CD8-positive, alpha-beta memory T cell (primary cell): ENCODE measurements at regions of chr5 and their contacts with region 1.

Region 1: DNA sequence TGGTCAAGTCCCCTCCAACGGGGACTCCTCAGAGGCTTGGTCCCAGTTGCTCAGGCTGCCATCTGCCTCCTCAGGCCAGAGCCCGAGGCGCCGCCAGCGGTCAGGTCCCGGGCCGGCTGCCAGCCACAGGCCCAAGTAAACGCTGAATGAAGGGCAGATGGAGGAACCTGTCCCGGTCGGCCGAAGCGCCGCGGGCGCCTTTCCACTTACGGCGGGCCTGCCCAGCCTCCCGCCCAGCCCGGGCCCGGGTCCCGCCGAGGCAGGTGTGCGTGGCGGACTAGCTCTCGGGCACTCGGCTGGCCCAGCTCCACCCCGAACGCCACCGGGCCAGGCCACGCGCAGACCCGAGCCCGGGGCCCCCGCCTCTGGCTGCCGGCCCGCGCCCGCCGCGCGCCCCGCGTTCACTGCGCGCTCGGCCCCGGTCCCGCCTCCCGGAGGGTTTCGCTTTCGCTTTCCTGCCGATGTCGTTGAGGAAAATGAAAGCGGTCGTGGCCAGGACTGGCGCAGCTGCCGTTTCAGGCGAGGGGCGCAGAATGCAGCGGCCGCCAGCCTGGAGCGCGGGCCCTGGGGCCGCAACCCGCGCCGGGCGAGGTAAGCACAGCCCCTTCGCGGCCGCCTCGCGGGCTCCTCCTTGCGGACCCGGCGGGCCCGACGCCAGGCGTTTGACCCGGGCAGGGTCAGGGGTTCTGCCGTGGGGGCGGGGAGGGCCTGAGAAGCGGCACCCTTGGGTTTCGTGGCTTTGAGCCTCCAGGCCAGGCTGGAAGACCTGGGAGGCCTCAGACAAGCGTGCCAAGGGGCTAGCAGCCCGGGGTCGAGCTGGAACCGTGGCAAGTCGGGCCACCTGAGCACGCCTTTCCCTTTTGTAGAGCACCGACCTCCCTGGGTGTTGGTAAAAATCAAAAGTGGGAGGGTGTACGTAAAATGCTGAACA is 41.2 kb downstream of the SLC22A5 start:
- DNase-seq: peak; percentile 78 to 91 (median 85)
- H3K4me3 ChIP-seq: peak overlapping the region; percentile 84
- H3K4me3 Mint-ChIP-seq: peak overlapping the region; percentile 91 to 99 (median 96)
- H3K27ac ChIP-seq: peak overlapping the region; percentile 93
- H3K27ac Mint-ChIP-seq: peak overlapping the region; percentile 96 to 99 (median 98)
- H3K4me1 ChIP-seq: peaks cover 74% of the 10 kb centered on the region
- H3K4me1 Mint-ChIP-seq: peaks cover 70 to 91% (median 75%) of the 10 kb centered on the region in 3 donors
- H3K27me3 ChIP-seq: no peaks in the 10 kb centered on the region
- H3K27me3 Mint-ChIP-seq: no peaks in the 10 kb centered on the region

Region 2: GRCh38 chr5:132369474-132370180 is 41.1 kb before region 1 on chr5 and contains the start of gene SLC22A5:
- CTCF ChIA-PET with region 1: interaction called, 3 read pairs
- POLR2A ChIA-PET with region 1: interaction called, 10 read pairs
- DNase-seq: peak; percentile 56 to 81 (median 70)
- H3K4me3 ChIP-seq: peak within 1 kb of the TSS; percentile 74
- H3K4me3 Mint-ChIP-seq: peak within 1 kb of the TSS; percentile 67 to 92 (median 83)
- H3K27ac ChIP-seq: peak within 1 kb of the TSS; percentile 69
- H3K27ac Mint-ChIP-seq: peak within 1 kb of the TSS in 7 of 8 donors; percentile 4 to 95 (median 70)
- H3K4me1 ChIP-seq: peaks cover 27% of the 10 kb centered on the region
- H3K4me1 Mint-ChIP-seq: peaks cover 17 to 30% (median 29%) of the 10 kb centered on the region in 3 donors
- H3K27me3 ChIP-seq: no peaks in the 10 kb centered on the region
- H3K27me3 Mint-ChIP-seq: no peaks in the 10 kb centered on the region
- total RNA-seq, gene SLC22A5: 5.2 to 5.9 TPM

Region 3: DNA sequence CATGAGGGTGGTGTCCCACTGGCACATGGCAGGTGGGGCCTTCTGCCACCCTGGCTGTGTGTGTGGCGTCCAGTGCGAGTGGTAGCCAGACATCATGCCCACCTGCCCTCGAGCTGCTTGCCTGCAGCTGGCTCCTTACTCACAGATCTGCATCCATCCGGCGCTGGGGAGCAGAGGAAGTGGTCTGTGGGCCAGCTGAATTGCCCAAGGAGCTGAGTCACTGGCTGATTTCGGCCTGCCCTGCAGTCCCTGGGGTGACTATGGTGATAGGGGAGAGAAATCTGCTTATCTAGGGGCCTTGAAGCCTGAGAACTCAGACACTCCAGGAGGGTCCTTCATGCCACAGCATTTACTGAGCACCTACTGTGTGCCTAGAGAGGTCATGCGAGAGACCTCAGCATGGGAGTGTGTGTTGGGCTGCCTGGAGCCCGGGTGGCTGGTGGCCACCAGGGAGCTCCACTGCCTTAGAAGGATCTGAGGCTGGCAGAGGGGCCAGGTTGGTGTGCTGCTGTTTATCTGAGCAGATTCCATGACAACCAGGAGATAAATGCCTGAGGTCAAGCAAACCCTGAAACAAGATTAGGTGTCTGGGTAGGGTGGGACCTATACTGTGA is 15.9 kb after region 1 on chr5:
- CTCF ChIA-PET with region 1: interaction called, 23 read pairs
- POLR2A ChIA-PET with region 1: interaction called, 14 read pairs
- DNase-seq: peak; percentile 37 to 83 (median 52)
- H3K4me3 ChIP-seq: peak overlapping the region; percentile 57
- H3K4me3 Mint-ChIP-seq: peak overlapping the region; percentile 61 to 89 (median 79)
- H3K27ac ChIP-seq: peak overlapping the region; percentile 84
- H3K27ac Mint-ChIP-seq: peak overlapping the region; percentile 95 to 99 (median 98)
- H3K4me1 ChIP-seq: peaks cover 100% of the 10 kb centered on the region
- H3K4me1 Mint-ChIP-seq: peaks cover 96 to 98% (median 97%) of the 10 kb centered on the region in 3 donors
- H3K27me3 ChIP-seq: no peaks in the 10 kb centered on the region
- H3K27me3 Mint-ChIP-seq: no peaks in the 10 kb centered on the region

Region 4: DNA sequence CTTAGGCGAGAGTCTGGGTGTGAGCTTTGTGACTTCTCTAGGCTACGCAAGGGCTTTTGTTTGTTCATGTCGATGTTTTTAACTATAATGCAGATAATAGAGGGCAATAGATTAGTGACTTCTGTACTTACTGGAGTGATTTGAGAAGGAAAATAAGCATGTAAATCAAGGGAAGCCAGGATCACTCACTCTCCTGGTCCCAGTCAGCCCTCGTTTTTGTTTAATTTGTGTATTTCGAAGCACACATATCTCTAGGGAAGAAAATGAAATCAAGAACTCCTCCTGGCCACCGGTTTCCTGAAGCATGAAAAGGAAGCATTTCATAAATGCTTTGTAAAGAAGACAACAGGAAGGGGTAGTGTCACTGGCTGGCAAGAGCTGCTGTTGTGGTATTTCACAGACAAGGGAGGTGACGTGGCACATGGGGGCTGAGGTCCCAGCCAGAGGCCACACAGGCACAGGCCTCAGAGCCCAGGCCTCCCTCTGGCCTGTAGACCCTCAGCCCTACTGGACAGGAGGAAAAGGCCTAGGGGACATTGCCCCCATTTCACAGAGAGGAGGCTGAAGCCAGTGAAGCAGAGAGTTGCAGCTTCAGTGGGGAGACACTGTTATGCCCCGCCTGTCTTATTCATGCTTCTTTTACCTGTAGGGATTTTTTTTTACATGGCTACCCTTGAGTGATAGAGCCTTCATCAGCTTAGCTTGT is 45.7 kb after region 1 on chr5:
- CTCF ChIA-PET with region 1: interaction called, 25 read pairs
- POLR2A ChIA-PET with region 1: interaction called, 43 read pairs
- DNase-seq: peak; percentile 55 to 85 (median 78)
- H3K4me3 ChIP-seq: peak overlapping the region; percentile 47
- H3K4me3 Mint-ChIP-seq: peak overlapping the region; percentile 37 to 86 (median 81)
- H3K27ac ChIP-seq: peak overlapping the region; percentile 93
- H3K27ac Mint-ChIP-seq: peak overlapping the region; percentile 98 to 100 (median 100)
- H3K4me1 ChIP-seq: peaks cover 94% of the 10 kb centered on the region
- H3K4me1 Mint-ChIP-seq: peaks cover 92 to 97% (median 95%) of the 10 kb centered on the region in 3 donors
- H3K27me3 ChIP-seq: no peaks in the 10 kb centered on the region
- H3K27me3 Mint-ChIP-seq: peaks cover 0 to 2% of the 10 kb centered on the region in 2 donors

Region 5: GRCh38 chr5:132473019-132473531 is 62.4 kb after region 1 on chr5:
- CTCF ChIA-PET with region 1: interaction called, 22 read pairs
- POLR2A ChIA-PET with region 1: interaction called, 36 read pairs
- DNase-seq: peak; percentile 81 to 96 (median 89)
- H3K4me3 ChIP-seq: no peak overlapping the region
- H3K4me3 Mint-ChIP-seq: peak overlapping the region; percentile 39 to 86 (median 64)
- H3K27ac ChIP-seq: peak overlapping the region; percentile 62
- H3K27ac Mint-ChIP-seq: peak overlapping the region; percentile 93 to 99 (median 96)
- H3K4me1 ChIP-seq: peaks cover 86% of the 10 kb centered on the region
- H3K4me1 Mint-ChIP-seq: peaks cover 87 to 99% (median 97%) of the 10 kb centered on the region in 3 donors
- H3K27me3 ChIP-seq: no peaks in the 10 kb centered on the region
- H3K27me3 Mint-ChIP-seq: peaks cover 0 to 9% of the 10 kb centered on the region in 2 donors

Region 6: DNA sequence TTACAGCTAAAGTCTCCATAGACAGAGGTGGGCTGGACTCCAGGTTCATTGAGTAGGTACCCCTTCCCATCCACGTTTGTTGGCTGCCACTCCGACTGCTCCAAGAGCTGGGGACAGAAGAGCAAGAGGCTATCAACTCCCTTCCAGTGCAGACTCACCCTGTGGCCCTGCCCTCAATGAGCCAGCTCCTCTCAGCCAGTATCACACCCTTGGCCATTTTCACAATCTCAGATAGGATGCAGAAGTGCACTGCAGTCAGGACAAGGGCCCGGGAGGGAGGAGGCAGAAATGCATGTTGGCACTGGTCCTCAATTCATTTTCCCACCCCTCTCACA is 73.6 kb after region 1 on chr5:
- CTCF ChIA-PET with region 1: interaction called, 78 read pairs
- POLR2A ChIA-PET with region 1: interaction called, 77 read pairs
- DNase-seq: no peak
- H3K4me3 ChIP-seq: no peak overlapping the region
- H3K4me3 Mint-ChIP-seq: peak overlapping the region in 6 of 7 donors; percentile 9 to 99 (median 68)
- H3K27ac ChIP-seq: no peak overlapping the region
- H3K27ac Mint-ChIP-seq: peak overlapping the region in 7 of 8 donors; percentile 73 to 100 (median 85)
- H3K4me1 ChIP-seq: peaks cover 78% of the 10 kb centered on the region
- H3K4me1 Mint-ChIP-seq: peaks cover 77 to 91% (median 78%) of the 10 kb centered on the region in 3 donors
- H3K27me3 ChIP-seq: no peaks in the 10 kb centered on the region
- H3K27me3 Mint-ChIP-seq: peaks cover 0 to 10% of the 10 kb centered on the region in 2 donors

Region 7: GRCh38 chr5:132495667-132496190 is 85.0 kb after region 1 on chr5:
- CTCF ChIA-PET with region 1: interaction called, 78 read pairs
- POLR2A ChIA-PET with region 1: interaction called, 77 read pairs
- DNase-seq: peak; percentile 50 to 76 (median 63)
- H3K4me3 ChIP-seq: peak overlapping the region; percentile 79
- H3K4me3 Mint-ChIP-seq: peak overlapping the region; percentile 88 to 99 (median 97)
- H3K27ac ChIP-seq: peak overlapping the region; percentile 82
- H3K27ac Mint-ChIP-seq: peak overlapping the region; percentile 96 to 100 (median 98)
- H3K4me1 ChIP-seq: peaks cover 72% of the 10 kb centered on the region
- H3K4me1 Mint-ChIP-seq: peaks cover 67 to 84% (median 78%) of the 10 kb centered on the region in 3 donors
- H3K27me3 ChIP-seq: no peaks in the 10 kb centered on the region
- H3K27me3 Mint-ChIP-seq: peaks cover 0 to 2% of the 10 kb centered on the region in 2 donors